Gastrocnemius medialis (tissue), 4 donors: ENCODE measurements at regions of chr15 and their contacts with region 1.

Region 1: GRCh38 chr15:55897560-55898336 is 95.7 kb downstream of the NEDD4 start:
- DNase-seq: peak; percentile 55 to 70
- ATAC-seq: peak; percentile 56 to 66
- H3K4me3 ChIP-seq: peak overlapping the region; percentile 5 to 39 (median 24)
- H3K27ac ChIP-seq: peak overlapping the region; percentile 86 to 97 (median 90)
- H3K4me1 ChIP-seq: peaks cover 56 to 74% of the 10 kb centered on the region in 2 donors
- H3K27me3 ChIP-seq: no peaks in the 10 kb centered on the region
- CTCF ChIP-seq: peak; percentile 75 to 86 (median 80)
- POLR2A ChIP-seq: no peak

Region 2: GRCh38 chr15:55846116-55846707 is 51.5 kb before region 1 on chr15:
- in situ Hi-C with region 1: no loop called
- intact Hi-C with region 1: loop called (anchors 5 kb)
- DNase-seq: no peak
- ATAC-seq: peak; percentile 55 to 59
- H3K4me3 ChIP-seq: no peak overlapping the region
- H3K27ac ChIP-seq: peak overlapping the region in 1 of 4 donors; percentile 59
- H3K4me1 ChIP-seq: no peaks in the 10 kb centered on the region
- H3K27me3 ChIP-seq: no peaks in the 10 kb centered on the region
- CTCF ChIP-seq: peak; percentile 63 to 84 (median 78)
- POLR2A ChIP-seq: no peak

Region 3: GRCh38 chr15:55868707-55869106 is 29.0 kb before region 1 on chr15:
- in situ Hi-C with region 1: no loop called
- intact Hi-C with region 1: loop called (anchors 2 kb)
- DNase-seq: peak in 1 of 2 donors; percentile 53
- ATAC-seq: peak; percentile 95 to 96
- H3K4me3 ChIP-seq: no peak overlapping the region
- H3K27ac ChIP-seq: peak overlapping the region; percentile 76 to 87 (median 83)
- H3K4me1 ChIP-seq: peaks cover 51 to 59% of the 10 kb centered on the region in 2 donors
- H3K27me3 ChIP-seq: no peaks in the 10 kb centered on the region
- CTCF ChIP-seq: no peak
- POLR2A ChIP-seq: no peak

Region 4: DNA sequence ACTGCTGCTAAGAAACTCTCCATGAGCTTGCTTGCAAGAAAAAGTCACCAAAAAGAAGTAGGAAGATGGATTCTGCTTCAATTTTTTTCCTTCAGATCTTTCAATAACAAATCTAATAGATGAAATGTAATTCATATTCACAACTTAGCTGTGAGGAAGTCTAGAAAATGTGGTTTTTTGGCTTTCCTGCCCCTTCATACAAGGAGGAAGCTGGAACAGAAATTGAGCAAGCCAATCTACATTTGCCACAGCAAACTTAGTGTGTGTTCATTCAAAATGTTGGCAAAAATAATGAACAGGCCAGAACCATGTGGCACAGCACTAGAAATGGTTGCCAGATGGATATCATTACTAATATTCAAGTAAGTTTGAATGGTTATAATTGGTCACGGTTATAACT is 188.8 kb after region 1 on chr15:
- in situ Hi-C with region 1: no loop called
- intact Hi-C with region 1: no loop called
- DNase-seq: no peak
- ATAC-seq: no peak
- H3K4me3 ChIP-seq: no peak overlapping the region
- H3K27ac ChIP-seq: no peak overlapping the region
- H3K4me1 ChIP-seq: peaks cover 0 to 7% of the 10 kb centered on the region in 2 donors
- H3K27me3 ChIP-seq: no peaks in the 10 kb centered on the region
- CTCF ChIP-seq: no peak
- POLR2A ChIP-seq: no peak

Region 5: DNA sequence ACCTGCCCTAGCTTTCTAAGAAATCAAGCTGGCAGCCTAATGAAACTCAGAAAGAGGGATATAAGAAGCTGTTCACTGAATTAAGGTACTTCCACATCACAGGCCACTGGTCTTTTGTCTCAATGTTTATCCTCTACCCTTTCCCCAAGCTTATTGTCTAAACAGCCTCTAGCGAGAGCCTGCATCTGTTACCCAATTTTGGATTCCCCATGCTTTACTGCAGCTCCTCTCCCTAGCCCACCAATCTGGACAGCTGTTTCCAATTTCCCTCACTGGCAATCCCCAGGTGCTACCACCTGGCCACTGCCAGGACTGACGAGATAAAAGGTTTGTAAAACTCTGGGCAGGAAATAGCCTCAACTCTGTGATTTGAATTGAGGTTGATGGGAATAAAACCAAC is 409.4 kb after region 1 on chr15:
- in situ Hi-C with region 1: no loop called
- intact Hi-C with region 1: no loop called
- DNase-seq: no peak
- ATAC-seq: no peak
- H3K4me3 ChIP-seq: no peak overlapping the region
- H3K27ac ChIP-seq: no peak overlapping the region
- H3K4me1 ChIP-seq: no peaks in the 10 kb centered on the region
- H3K27me3 ChIP-seq: no peaks in the 10 kb centered on the region
- CTCF ChIP-seq: no peak
- POLR2A ChIP-seq: no peak